ENCODE measurements at regions of chr12 and their contacts with region 1.

Region 1: DNA sequence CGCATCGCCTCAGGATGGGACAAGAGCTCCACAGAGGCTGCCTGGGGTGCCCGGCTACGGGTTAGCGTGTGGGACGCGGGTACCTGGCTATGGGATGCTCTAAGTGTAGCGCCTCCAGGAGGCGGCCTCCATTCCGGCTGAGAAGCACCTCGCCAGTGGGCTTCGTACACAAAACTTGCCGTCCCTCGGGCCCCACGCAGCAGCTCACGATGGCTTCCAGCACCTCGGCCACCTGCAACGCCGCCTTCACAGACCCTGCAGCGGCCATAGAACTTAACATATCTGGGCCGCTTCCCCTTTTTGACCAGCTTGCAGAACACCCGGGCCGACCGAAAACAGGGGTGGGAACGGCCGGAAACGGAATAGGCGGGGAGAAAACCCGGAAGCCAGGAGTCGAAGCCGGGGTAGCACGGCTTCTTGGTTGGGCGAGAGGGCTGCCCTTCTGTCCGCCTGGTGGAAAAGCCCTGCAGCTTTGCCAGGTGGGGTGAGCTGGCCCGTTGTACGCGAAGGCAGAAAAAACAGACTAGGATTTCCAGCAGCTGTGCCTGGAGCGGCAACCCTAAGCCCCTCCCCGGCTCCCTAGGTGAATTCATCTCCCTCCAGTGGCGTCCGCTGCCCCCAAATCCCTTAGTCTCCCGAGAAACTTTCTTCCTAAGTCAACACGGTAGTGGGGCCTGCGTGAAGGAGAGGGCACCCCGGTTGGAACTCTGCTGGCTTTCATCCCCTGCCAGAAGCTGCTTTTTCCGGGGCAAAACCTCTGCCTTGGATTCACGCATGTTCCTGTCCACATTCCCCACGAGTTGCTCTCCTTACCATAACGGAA is at the start of gene BBS10:
- DNase-seq: peak; percentile 92
- ATAC-seq: peak; percentile 90
- H3K4me3 ChIP-seq: peak within 1 kb of the TSS; percentile 92
- H3K27ac ChIP-seq: peak within 1 kb of the TSS; percentile 60
- H3K4me1 ChIP-seq: peaks cover 21% of the 10 kb centered on the region
- H3K27me3 ChIP-seq: no peaks in the 10 kb centered on the region
- CTCF ChIP-seq: peak; percentile 67
- total RNA-seq, gene BBS10: 7.5 and 8.0 TPM in 2 replicates

Region 2: DNA sequence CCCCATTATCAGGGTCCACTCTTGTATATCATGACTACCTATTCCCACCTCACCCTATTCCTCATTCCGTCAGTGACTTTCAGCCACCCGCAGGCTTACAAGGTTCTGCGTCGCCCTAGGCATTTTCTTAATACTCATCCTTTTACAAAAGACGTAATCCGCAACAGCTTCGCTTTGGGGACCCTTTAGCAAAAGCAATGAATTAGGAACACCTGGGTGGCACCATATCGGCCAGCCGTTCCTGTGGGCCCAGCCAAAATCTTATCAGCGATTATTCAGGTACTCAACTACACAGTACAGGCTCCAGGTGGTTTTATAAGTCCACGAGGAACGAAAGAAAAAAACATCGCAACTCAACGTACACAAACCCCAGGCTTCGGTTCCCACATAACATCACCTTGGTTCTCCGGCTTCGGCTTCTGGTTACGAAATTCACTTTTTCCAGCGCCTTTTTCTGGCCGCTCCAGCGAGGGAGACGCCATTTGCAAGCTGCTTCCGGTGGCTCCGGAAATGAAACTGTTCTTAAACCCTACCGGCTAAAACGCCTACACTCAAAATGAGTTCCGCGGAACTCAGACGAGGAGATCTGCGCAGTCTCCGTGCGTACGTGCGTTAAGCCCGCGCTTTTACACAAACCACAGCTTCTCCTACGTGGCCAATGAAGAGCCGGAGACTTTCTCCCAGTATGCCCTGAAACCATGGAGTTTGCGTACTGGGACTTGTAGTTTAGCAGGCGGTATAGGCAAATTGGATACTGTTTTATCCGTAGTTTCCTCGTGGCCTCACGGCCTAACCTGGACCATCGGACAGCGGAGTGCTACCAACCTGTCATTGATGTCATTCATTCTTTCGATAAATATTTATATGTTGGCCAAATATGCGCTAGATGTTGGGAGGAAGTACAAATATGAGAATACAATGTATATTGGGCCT is 836.9 kb before region 1 on chr12 and contains the start of gene KRR1:
- CTCF ChIA-PET with region 1: no interaction called
- POLR2A ChIA-PET with region 1: no interaction called
- intact Hi-C with region 1: loop called (anchors 5 kb)
- DNase-seq: peak; percentile 98
- ATAC-seq: peak; percentile 97
- H3K4me3 ChIP-seq: peak within 1 kb of the TSS; percentile 87
- H3K27ac ChIP-seq: 0 out of 2 replicates have a peak within 1 kb of the TSS, but pooled peaks have one; percentile 16
- H3K4me1 ChIP-seq: peaks cover 16% of the 10 kb centered on the region; the same call in 1 of the 2 replicates
- H3K27me3 ChIP-seq: no peaks in the 10 kb centered on the region
- CTCF ChIP-seq: no peak
- total RNA-seq, gene KRR1: 49.9 and 68.4 TPM in 2 replicates

Region 3: DNA sequence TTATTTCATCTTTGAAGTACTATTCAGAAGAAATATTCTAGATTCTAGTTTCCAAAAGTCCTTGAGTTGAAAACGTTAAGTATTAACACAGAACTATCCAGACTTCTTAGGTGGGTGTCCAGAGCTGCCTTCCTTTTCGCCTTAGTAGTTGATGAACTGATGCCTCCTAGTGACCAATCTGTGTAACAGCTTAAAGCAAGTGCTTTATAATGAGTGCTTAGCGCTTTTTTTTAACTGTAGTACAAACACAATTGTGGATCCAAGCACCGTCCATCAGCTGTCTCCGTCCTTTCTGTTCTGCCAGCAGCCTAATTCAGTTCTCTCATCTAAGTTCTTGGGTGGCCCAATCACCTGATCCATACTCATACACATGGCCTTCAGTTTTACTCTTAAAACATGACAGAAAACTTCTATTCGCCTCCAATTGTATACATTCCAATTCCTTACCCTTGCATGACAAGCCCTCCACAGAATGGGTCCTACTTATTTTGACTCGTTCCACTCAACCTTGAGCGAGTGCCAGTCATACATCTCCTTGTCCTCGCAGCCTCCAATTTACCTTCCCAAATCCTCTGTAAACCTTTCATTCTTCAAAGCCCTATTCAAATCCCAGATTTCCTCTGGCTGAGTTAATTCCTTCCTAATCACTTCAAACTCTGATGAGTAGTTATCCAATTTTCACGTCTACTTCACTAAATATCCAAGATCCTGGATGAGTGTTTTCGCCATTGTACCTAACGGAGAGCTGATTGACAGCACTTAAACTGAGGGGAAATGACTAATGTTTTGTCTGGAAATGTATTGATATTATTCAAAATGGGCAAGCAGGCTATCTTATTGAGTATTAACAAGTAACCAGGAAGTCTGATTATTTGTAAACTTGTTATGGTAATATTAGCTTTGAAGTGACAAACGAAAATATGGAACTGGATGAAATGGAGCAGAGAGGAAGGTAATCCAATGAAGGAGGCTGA is 310.9 kb before region 1 on chr12:
- CTCF ChIA-PET with region 1: interaction called, 4 read pairs
- POLR2A ChIA-PET with region 1: no interaction called
- intact Hi-C with region 1: loop called (anchors 2 kb)
- DNase-seq: peak; percentile 85
- ATAC-seq: peak; percentile 51
- H3K4me3 ChIP-seq: peak overlapping the region; percentile 15; the same call in 1 of the 2 replicates
- H3K27ac ChIP-seq: peak overlapping the region; percentile 29
- H3K4me1 ChIP-seq: peaks cover 42% of the 10 kb centered on the region
- H3K27me3 ChIP-seq: no peaks in the 10 kb centered on the region
- CTCF ChIP-seq: peak; percentile 91

Region 4: GRCh38 chr12:76236611-76237010 is 111.7 kb before region 1 on chr12:
- CTCF ChIA-PET with region 1: no interaction called
- POLR2A ChIA-PET with region 1: interaction called, 3 read pairs
- intact Hi-C with region 1: loop called (anchors 2 kb)
- DNase-seq: peak; percentile 97
- ATAC-seq: peak; percentile 93
- H3K4me3 ChIP-seq: peak overlapping the region; percentile 21; the same call in 1 of the 2 replicates
- H3K27ac ChIP-seq: peak overlapping the region; percentile 86
- H3K4me1 ChIP-seq: peaks cover 35% of the 10 kb centered on the region
- H3K27me3 ChIP-seq: no peaks in the 10 kb centered on the region
- CTCF ChIP-seq: no peak

Region 5: DNA sequence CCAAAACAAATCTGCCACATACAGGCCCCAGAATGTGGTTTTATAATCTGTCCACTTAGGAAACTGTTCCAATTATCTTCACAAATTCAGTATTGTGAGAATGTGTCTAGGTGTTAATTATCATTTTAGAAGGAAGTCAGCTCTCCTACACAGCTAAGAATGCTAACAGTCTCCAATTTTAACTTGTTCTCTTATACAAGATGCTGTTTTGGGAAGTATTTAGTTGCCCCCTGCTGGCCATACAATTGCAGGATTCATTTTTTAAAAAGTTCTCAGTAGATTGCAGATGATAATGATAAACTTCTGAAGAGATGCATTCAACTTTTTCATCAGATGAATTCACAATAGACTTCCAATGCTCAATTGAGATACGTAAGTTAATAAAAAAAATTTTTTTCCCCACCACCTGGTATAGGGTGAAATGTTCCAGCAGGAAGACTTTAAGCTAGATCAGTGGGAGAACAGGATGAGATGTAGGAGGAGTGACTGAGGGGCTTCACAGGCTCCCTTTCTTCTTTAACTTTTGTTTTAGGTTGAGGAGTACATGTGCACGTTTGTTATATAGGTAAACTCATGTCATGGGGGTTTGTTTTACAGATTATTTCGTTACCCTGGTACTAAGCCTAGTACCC is 238.6 kb after region 1 on chr12:
- CTCF ChIA-PET with region 1: interaction called, 4 read pairs
- POLR2A ChIA-PET with region 1: no interaction called
- intact Hi-C with region 1: loop called (anchors 5 kb)
- DNase-seq: peak; percentile 60
- ATAC-seq: peak; percentile 43
- H3K4me3 ChIP-seq: no peak overlapping the region
- H3K27ac ChIP-seq: no peak overlapping the region
- H3K4me1 ChIP-seq: peaks cover 6% of the 10 kb centered on the region
- H3K27me3 ChIP-seq: no peaks in the 10 kb centered on the region
- CTCF ChIP-seq: peak; percentile 89

Measured in PC-3 (cell line).